ENCODE measurements at regions of chr1 and their contacts with region 1.

Region 1: DNA sequence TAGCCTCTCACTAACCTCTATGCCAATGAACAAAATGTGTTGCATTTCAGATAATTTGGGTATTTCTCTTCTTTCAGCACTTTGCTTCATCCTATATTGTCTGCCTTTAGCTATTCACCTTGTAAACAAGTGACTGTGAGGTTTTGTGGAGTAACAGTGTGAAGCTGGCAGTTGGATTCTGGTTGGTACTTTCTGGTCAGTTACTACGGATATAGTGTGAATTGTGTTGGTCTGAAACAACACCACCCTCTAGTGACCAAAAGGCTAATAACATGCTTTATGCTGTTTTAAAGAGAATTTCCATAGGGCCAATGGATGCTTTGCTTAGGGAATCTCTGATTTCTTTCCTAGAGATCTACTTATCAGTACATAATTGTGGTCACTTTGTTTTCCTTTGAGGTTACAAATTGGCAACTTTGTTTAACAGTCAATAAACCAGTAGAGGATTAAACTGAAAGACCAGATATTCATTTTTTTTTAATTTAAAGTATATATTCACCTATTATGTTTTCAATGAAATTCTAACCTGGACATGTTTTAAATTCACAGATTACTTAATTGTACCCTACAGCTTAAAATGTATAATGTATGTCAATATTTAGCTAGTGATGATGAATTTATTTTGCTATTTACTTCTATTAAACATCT is 2.5 kb upstream of the PTGER3 start:
- DNase-seq: peak; percentile 60
- ATAC-seq: peak; percentile 72
- H3K4me3 ChIP-seq: no peak overlapping the region
- H3K27ac ChIP-seq: no peak overlapping the region
- H3K4me1 ChIP-seq: no peaks in the 10 kb centered on the region; the same call in 1 of the 2 replicates
- H3K27me3 ChIP-seq: peaks cover 20% of the 10 kb centered on the region
- CTCF ChIP-seq: peak; percentile 75; the same call in 1 of the 2 replicates

Region 2: GRCh38 chr1:70277875-70278274 is 772.2 kb before region 1 on chr1:
- CTCF ChIA-PET with region 1: no interaction called
- POLR2A ChIA-PET with region 1: interaction called, 11 read pairs
- in situ Hi-C with region 1: no loop called
- intact Hi-C with region 1: no loop called
- DNase-seq: no peak
- ATAC-seq: no peak
- H3K4me3 ChIP-seq: no peak overlapping the region
- H3K27ac ChIP-seq: no peak overlapping the region
- H3K4me1 ChIP-seq: no peaks in the 10 kb centered on the region
- H3K27me3 ChIP-seq: no peaks in the 10 kb centered on the region
- CTCF ChIP-seq: no peak

Region 3: GRCh38 chr1:70528590-70529333 is 521.3 kb before region 1 on chr1:
- CTCF ChIA-PET with region 1: no interaction called
- POLR2A ChIA-PET with region 1: no interaction called
- in situ Hi-C with region 1: no loop called
- intact Hi-C with region 1: loop called (anchors 2 kb)
- DNase-seq: peak; percentile 13
- ATAC-seq: peak; percentile 90
- H3K4me3 ChIP-seq: no peak overlapping the region
- H3K27ac ChIP-seq: no peak overlapping the region
- H3K4me1 ChIP-seq: no peaks in the 10 kb centered on the region; the same call in 1 of the 2 replicates
- H3K27me3 ChIP-seq: peaks cover 9% of the 10 kb centered on the region; the same call in 1 of the 2 replicates
- CTCF ChIP-seq: peak; percentile 84

Region 4: DNA sequence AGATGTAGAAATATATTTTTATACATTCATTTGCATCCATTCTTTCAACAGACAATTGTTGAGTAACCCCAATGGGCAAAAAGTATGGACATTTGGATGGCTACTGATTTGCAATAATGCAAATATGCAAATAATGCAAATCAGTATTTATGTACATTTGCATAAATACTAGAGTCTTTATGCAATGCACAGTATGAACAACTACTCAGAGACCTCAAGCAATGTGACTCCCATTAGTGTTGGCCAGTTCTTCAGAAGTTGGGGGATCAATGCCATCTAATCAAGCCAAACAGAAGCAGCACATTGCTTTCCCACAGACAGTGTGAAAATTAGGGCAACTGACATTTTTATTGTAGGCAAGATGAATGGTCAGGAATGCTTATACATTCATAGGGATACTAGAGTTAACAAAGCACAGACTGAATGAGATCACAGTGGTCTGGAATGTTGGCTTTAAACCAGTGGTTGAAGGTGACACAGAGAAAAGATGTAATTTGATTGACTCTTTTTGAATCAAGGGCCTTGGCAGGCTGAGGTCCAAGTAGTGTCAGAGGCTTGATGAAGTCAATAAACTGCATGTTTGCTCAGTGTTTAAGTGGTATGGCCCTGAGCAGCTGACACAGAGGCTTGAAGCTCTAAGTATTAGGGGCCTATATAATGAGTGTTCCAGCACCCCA is 382.4 kb before region 1 on chr1:
- CTCF ChIA-PET with region 1: no interaction called
- POLR2A ChIA-PET with region 1: no interaction called
- in situ Hi-C with region 1: no loop called
- intact Hi-C with region 1: no loop called
- DNase-seq: no peak
- ATAC-seq: no peak
- H3K4me3 ChIP-seq: no peak overlapping the region
- H3K27ac ChIP-seq: no peak overlapping the region
- H3K4me1 ChIP-seq: no peaks in the 10 kb centered on the region
- H3K27me3 ChIP-seq: no peaks in the 10 kb centered on the region
- CTCF ChIP-seq: no peak

Region 5: DNA sequence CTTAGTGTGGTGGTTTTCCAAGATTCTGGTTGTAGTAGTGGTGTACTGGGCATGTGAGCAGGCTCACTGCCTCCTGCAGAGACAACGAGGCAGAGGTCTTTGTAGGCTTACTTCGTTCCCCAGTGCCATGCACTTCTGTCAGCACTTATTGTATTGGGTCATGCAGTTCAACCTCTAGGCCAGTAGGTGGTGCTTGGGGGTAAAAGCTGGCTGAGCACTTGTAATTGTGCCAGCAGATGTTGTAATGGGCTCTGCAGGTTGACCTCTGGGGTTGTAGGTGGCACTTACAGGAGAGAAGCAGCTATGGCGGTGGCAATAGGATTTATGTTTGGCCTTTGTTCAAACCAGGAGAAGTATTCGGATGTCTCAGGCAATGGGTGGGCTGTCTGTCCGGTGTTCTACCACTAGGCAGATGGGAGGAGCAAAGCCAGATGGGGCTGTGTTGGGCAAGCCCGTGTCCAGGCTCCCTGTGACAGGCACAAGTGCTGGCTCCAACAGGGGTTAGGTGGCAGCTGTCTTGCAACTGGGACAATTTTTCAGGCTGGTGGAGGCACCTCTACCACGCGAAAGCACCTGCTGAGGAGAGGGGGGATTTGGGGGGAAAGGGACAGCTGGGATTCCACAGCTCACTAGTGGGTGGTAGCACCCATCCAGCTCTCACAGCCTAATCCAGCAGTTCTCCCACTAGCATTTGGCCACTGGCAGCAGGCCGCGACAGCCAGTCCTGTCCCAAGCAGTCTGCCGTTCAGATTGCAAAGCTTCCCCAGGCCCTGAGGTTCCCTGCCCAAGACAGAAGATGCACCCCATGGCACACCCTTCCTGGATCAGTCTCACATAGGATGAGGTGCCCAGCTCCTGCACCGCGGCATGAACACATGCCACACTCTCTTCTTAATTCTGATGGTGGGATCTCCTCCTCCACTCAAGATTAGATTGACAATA is 364.5 kb before region 1 on chr1:
- CTCF ChIA-PET with region 1: no interaction called
- POLR2A ChIA-PET with region 1: no interaction called
- in situ Hi-C with region 1: no loop called
- intact Hi-C with region 1: loop called (anchors 1 kb)
- DNase-seq: peak; percentile 55
- ATAC-seq: peak; percentile 53; the same call in 1 of the 2 replicates
- H3K4me3 ChIP-seq: no peak overlapping the region
- H3K27ac ChIP-seq: no peak overlapping the region
- H3K4me1 ChIP-seq: no peaks in the 10 kb centered on the region
- H3K27me3 ChIP-seq: no peaks in the 10 kb centered on the region
- CTCF ChIP-seq: peak; percentile 78